CD8-positive, alpha-beta T cell (primary cell): ENCODE measurements at regions of chr17 and their contacts with region 1.

Region 1: GRCh38 chr17:30134551-30134950 is 17.9 kb downstream of the NSRP1 start:
- DNase-seq: no peak
- ATAC-seq: no peak
- H3K4me3 ChIP-seq: no peak overlapping the region
- H3K4me3 Mint-ChIP-seq: no peak overlapping the region
- H3K27ac ChIP-seq: no peak overlapping the region
- H3K27ac Mint-ChIP-seq: no peak overlapping the region
- H3K4me1 ChIP-seq: no peaks in the 10 kb centered on the region
- H3K4me1 Mint-ChIP-seq: peaks cover 37% of the 10 kb centered on the region
- H3K27me3 ChIP-seq: no peaks in the 10 kb centered on the region
- H3K27me3 Mint-ChIP-seq: no peaks in the 10 kb centered on the region
- CTCF ChIP-seq: no peak

Region 2: DNA sequence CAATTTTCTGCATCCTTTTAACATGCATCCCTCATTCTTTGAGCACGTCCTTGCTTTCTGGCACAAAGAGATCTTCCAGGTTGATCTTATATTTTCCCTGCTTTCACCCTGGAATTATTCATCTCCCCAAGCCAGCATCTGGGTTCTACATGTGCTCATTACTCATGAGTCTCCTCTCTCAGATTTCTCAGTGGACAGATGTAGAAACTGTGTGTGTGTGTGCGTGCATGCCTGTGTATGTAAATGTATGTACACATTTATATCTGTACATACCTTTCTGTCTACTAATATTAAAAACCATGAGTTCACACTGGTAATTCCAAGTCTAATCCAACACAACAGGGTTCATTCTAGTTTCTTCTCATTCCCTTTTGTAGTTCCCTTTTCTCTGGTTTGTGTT is 59.8 kb before region 1 on chr17:
- CTCF ChIA-PET with region 1: no interaction called
- POLR2A ChIA-PET with region 1: no interaction called
- intact Hi-C with region 1: no loop called
- DNase-seq: no peak
- ATAC-seq: no peak
- H3K4me3 ChIP-seq: no peak overlapping the region
- H3K4me3 Mint-ChIP-seq: no peak overlapping the region
- H3K27ac ChIP-seq: no peak overlapping the region
- H3K27ac Mint-ChIP-seq: no peak overlapping the region
- H3K4me1 ChIP-seq: no peaks in the 10 kb centered on the region
- H3K4me1 Mint-ChIP-seq: no peaks in the 10 kb centered on the region
- H3K27me3 ChIP-seq: no peaks in the 10 kb centered on the region
- H3K27me3 Mint-ChIP-seq: peaks cover 16% of the 10 kb centered on the region
- CTCF ChIP-seq: no peak

Region 3: GRCh38 chr17:30224419-30224985 is 90.0 kb after region 1 on chr17:
- CTCF ChIA-PET with region 1: no interaction called
- POLR2A ChIA-PET with region 1: no interaction called
- intact Hi-C with region 1: no loop called
- DNase-seq: no peak
- ATAC-seq: no peak
- H3K4me3 ChIP-seq: no peak overlapping the region
- H3K4me3 Mint-ChIP-seq: no peak overlapping the region
- H3K27ac ChIP-seq: no peak overlapping the region
- H3K27ac Mint-ChIP-seq: no peak overlapping the region
- H3K4me1 ChIP-seq: no peaks in the 10 kb centered on the region
- H3K4me1 Mint-ChIP-seq: no peaks in the 10 kb centered on the region
- H3K27me3 ChIP-seq: peaks cover 0 to 3% of the 10 kb centered on the region in 2 experiments
- H3K27me3 Mint-ChIP-seq: peaks cover 13% of the 10 kb centered on the region
- CTCF ChIP-seq: no peak

Region 4: GRCh38 chr17:30234964-30235363 is 100.4 kb after region 1 on chr17:
- CTCF ChIA-PET with region 1: no interaction called
- POLR2A ChIA-PET with region 1: no interaction called
- intact Hi-C with region 1: no loop called
- DNase-seq: no peak
- ATAC-seq: no peak
- H3K4me3 ChIP-seq: peak overlapping the region in 1 of 2 experiments; percentile 11
- H3K4me3 Mint-ChIP-seq: peak overlapping the region; percentile 71
- H3K27ac ChIP-seq: no peak overlapping the region
- H3K27ac Mint-ChIP-seq: no peak overlapping the region
- H3K4me1 ChIP-seq: peaks cover 10% of the 10 kb centered on the region
- H3K4me1 Mint-ChIP-seq: peaks cover 24% of the 10 kb centered on the region
- H3K27me3 ChIP-seq: peaks cover 8 to 15% of the 10 kb centered on the region in 2 experiments
- H3K27me3 Mint-ChIP-seq: peaks cover 62% of the 10 kb centered on the region
- CTCF ChIP-seq: no peak

Region 5: DNA sequence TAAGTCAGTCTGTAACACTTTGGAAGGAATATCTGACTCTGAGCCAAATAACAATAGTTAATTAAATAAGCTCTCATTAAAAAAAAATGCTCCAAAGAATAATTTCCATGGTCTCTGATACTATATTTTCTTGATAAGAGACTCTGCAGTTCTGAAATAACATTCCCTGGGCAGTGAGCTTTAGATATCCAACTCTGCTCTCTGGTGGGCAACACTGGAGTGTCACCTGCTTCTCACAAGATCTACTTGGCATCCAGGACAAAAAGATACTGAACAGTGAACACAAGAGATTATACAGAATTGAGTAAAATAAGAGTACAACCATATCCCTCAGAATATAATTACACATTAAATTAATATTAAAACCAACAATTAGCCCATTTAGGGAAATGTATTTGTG is 143.5 kb after region 1 on chr17:
- CTCF ChIA-PET with region 1: no interaction called
- POLR2A ChIA-PET with region 1: no interaction called
- intact Hi-C with region 1: loop called in 1 of 2 experiments (anchors 5 kb)
- DNase-seq: peak in 3 of 9 experiments; percentile 22 to 37 (median 23)
- ATAC-seq: peak; percentile 34
- H3K4me3 ChIP-seq: no peak overlapping the region
- H3K4me3 Mint-ChIP-seq: no peak overlapping the region
- H3K27ac ChIP-seq: no peak overlapping the region
- H3K27ac Mint-ChIP-seq: no peak overlapping the region
- H3K4me1 ChIP-seq: no peaks in the 10 kb centered on the region
- H3K4me1 Mint-ChIP-seq: no peaks in the 10 kb centered on the region
- H3K27me3 ChIP-seq: no peaks in the 10 kb centered on the region
- H3K27me3 Mint-ChIP-seq: no peaks in the 10 kb centered on the region
- CTCF ChIP-seq: peak; percentile 36